Heart right ventricle (tissue), 16 donors: ENCODE measurements at regions of chr4 and their contacts with region 1.

Region 1: DNA sequence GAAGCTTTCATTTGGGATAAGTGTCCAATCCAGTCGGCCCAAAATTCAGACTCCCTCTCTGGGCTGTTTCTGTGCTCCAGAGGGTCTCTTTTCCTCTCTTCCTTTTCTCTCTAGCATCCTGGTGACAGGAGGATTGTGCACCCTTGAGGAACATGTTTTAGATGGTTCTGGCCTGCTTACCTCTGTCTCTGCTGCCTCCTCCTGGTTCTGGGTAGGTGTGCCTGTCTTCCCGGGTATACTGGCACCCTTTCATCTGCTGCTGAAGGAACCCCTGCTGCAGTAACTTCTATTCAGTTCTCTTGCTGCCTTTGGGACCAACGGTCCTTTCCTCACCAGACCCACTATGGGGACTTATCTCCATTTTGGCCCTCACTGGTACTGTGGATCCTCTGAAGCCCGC is 53.2 kb downstream of the HMGB2 start:
- DNase-seq: no peak
- ATAC-seq: peak in 2 of 8 donors; percentile 11 to 27
- H3K4me3 ChIP-seq: no peak overlapping the region
- H3K27ac ChIP-seq: peak overlapping the region in 1 of 10 donors; percentile 38
- H3K4me1 ChIP-seq: no peaks in the 10 kb centered on the region
- H3K27me3 ChIP-seq: no peaks in the 10 kb centered on the region
- CTCF ChIP-seq: no peak

Region 2: GRCh38 chr4:172648471-172648870 is 632.5 kb before region 1 on chr4:
- intact Hi-C with region 1: no loop called
- DNase-seq: no peak
- ATAC-seq: no peak
- H3K4me3 ChIP-seq: no peak overlapping the region
- H3K27ac ChIP-seq: no peak overlapping the region
- H3K4me1 ChIP-seq: no peaks in the 10 kb centered on the region
- H3K27me3 ChIP-seq: no peaks in the 10 kb centered on the region
- CTCF ChIP-seq: no peak

Region 3: GRCh38 chr4:173231916-173232315 is 49.1 kb before region 1 on chr4:
- intact Hi-C with region 1: loop called in 1 of 10 experiments (anchors 1 kb)
- DNase-seq: no peak
- ATAC-seq: peak in 6 of 8 donors; percentile 46 to 66 (median 56)
- H3K4me3 ChIP-seq: no peak overlapping the region
- H3K27ac ChIP-seq: peak overlapping the region in 1 of 10 donors; percentile 3
- H3K4me1 ChIP-seq: peaks cover 0 to 23% (median 12%) of the 10 kb centered on the region in 9 donors
- H3K27me3 ChIP-seq: no peaks in the 10 kb centered on the region
- CTCF ChIP-seq: peak in 6 of 9 donors; percentile 14 to 45 (median 29)